WTC11 (cell line): ENCODE measurements at regions of chr16 and their contacts with region 1.

Region 1: GRCh38 chr16:3134564-3135417 is at the start of gene ZNF213:
- DNase-seq: peak; percentile 94
- ATAC-seq: peak; percentile 94
- H3K4me3 Mint-ChIP-seq: peak within 1 kb of the TSS; percentile 98
- H3K27ac Mint-ChIP-seq: peak within 1 kb of the TSS; percentile 99
- H3K4me1 Mint-ChIP-seq: peaks cover 17% of the 10 kb centered on the region
- H3K27me3 Mint-ChIP-seq: no peaks in the 10 kb centered on the region
- CTCF ChIP-seq: no peak
- total RNA-seq, gene ZNF213: 8.9 to 11.6 TPM (median 10.3 TPM) in 3 replicates

Region 2: DNA sequence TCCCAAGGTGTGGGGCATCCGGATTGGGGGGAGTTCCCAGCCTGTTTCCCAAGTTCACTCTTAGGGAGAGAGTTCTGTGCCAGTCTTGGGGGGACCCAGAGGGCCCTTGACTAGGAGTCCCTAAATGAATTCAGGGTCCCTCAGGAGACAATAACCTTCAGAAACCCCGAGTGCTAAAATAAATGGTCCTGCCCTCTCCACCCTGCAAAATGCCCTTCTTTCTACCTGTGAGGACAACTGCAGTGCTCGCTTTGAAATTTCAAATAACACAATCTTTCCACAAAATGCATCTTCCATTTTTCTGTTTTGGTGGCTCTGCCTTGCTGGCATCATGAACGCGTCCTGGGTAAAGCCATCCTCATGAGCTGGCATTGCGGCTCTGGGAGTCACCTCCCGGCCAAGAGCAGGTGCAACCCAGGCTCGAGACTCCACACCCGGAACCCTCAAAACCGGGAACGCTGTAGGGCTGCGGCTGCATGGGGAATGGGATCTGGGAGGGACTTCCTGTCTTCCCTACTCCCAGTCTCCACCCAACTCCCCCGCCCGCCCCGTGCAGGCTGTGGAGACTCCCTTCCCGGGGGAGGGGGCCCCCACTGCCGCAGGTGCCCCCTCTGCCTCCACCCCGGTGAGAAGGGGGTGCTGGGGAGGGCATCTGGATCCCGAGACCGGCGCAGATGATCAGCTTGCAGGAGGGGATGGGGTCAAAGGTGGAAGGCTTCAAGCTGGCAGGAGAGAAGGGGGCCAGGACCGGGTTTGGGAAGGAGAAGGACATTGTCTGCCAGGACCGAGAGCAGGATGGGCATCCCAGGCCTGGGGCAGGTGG is 22.5 kb before region 1 on chr16 and contains the start of gene ZNF205:
- CTCF ChIA-PET with region 1: interaction called, 112 read pairs
- POLR2A ChIA-PET with region 1: interaction called, 4 read pairs
- DNase-seq: peak; percentile 88
- ATAC-seq: peak; percentile 94
- H3K4me3 Mint-ChIP-seq: peak within 1 kb of the TSS; percentile 88
- H3K27ac Mint-ChIP-seq: peak within 1 kb of the TSS; percentile 94
- H3K4me1 Mint-ChIP-seq: peaks cover 27% of the 10 kb centered on the region
- H3K27me3 Mint-ChIP-seq: no peaks in the 10 kb centered on the region
- CTCF ChIP-seq: no peak
- total RNA-seq, gene ZNF205: 17.7 to 22.7 TPM (median 21.3 TPM) in 3 replicates